ENCODE measurements at regions of chrX and their contacts with region 1.

Region 1: GRCh38 chrX:29478336-29479069 is 736.9 kb upstream of the MAGEB2 start:
- DNase-seq: peak; percentile 58
- CTCF ChIP-seq: peak; percentile 50

Region 2: GRCh38 chrX:29488919-29489318 is 10.4 kb after region 1 on chrX:
- CTCF ChIA-PET with region 1: interaction called, 31 read pairs
- POLR2A ChIA-PET with region 1: no interaction called
- DNase-seq: no peak
- CTCF ChIP-seq: no peak